ENCODE measurements at regions of chr20 and their contacts with region 1.

Region 1: DNA sequence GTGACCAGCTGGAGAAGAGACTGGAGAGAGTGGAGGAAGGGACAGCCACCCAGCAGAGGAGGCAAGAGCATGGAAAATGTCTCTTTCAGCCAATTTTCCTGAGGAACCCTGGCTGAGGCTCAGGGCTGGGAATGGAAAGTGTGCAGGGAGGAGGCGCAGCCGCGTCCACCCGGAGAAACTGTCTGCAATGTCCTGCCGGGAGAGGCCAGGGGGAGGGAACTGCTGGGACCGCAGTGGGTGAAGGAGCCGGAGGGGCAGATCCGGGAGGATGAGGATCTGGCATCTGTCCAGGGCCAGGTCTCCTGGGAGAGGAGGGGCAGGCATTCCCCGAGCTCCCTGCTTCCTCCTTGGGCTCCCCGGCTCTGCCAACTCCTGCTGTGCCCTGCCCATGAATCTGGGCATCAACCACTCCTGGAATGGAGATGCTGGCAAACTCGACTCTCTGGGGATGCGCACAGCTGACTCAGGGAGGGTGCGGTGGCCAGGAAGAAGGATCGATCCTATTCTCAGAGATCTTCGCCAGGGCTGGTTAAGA is 17.4 kb upstream of the HM13 start:
- DNase-seq: no peak
- ATAC-seq: no peak
- H3K4me3 Mint-ChIP-seq: no peak overlapping the region
- H3K27ac Mint-ChIP-seq: no peak overlapping the region
- H3K4me1 Mint-ChIP-seq: no peaks in the 10 kb centered on the region
- H3K27me3 Mint-ChIP-seq: peaks cover 22% of the 10 kb centered on the region
- CTCF ChIP-seq: no peak

Region 2: DNA sequence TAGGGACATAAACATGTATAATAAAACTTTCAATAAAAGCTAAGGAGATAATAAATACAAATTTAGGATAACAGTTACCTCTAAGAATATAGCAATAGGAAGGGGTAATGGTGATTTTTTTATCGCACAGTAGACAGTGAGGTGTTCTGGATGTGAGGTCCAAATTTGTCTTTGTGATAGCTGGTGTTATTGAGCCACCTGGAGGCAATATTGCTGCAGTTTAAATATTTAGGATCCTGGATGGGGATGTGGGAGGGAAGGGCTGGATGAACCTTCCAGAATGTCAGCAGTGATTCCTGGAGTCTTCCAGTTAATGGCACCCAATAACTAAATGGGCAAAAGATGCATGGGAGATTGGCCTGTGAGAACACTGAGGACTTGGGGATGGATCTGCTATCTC is 42.5 kb before region 1 on chr20:
- CTCF ChIA-PET with region 1: interaction called, 46 read pairs
- POLR2A ChIA-PET with region 1: no interaction called
- DNase-seq: no peak
- ATAC-seq: no peak
- H3K4me3 Mint-ChIP-seq: no peak overlapping the region
- H3K27ac Mint-ChIP-seq: no peak overlapping the region
- H3K4me1 Mint-ChIP-seq: no peaks in the 10 kb centered on the region
- H3K27me3 Mint-ChIP-seq: peaks cover 17% of the 10 kb centered on the region; the same call in 1 of the 2 replicates
- CTCF ChIP-seq: no peak

Region 3: GRCh38 chr20:31514159-31515071 is 17.6 kb after region 1 on chr20 and contains the start of gene HM13:
- CTCF ChIA-PET with region 1: interaction called, 16 read pairs
- POLR2A ChIA-PET with region 1: no interaction called
- DNase-seq: peak; percentile 90
- ATAC-seq: peak; percentile 72
- H3K4me3 Mint-ChIP-seq: peak within 1 kb of the TSS; percentile 34
- H3K27ac Mint-ChIP-seq: no peak within 1 kb of the TSS
- H3K4me1 Mint-ChIP-seq: no peaks in the 10 kb centered on the region
- H3K27me3 Mint-ChIP-seq: peaks cover 5% of the 10 kb centered on the region; the same call in 1 of the 2 replicates
- CTCF ChIP-seq: peak; percentile 91
- total RNA-seq, gene HM13: 93.3 to 103 TPM (median 101 TPM) in 3 replicates

Region 4: GRCh38 chr20:31560094-31560899 is 63.5 kb after region 1 on chr20:
- CTCF ChIA-PET with region 1: no interaction called
- POLR2A ChIA-PET with region 1: no interaction called
- DNase-seq: peak; percentile 77
- ATAC-seq: peak; percentile 52
- H3K4me3 Mint-ChIP-seq: no peak overlapping the region
- H3K27ac Mint-ChIP-seq: peak overlapping the region; percentile 93
- H3K4me1 Mint-ChIP-seq: peaks cover 10% of the 10 kb centered on the region
- H3K27me3 Mint-ChIP-seq: no peaks in the 10 kb centered on the region
- CTCF ChIP-seq: peak; percentile 91